RWPE1 (cell line): ENCODE measurements at regions of chr13 and their contacts with region 1.

Region 1: GRCh38 chr13:21139374-21139773 is 37.0 kb downstream of the SKA3 start:
- DNase-seq: no peak
- H3K27ac ChIP-seq: no peak overlapping the region
- CTCF ChIP-seq: no peak

Region 2: DNA sequence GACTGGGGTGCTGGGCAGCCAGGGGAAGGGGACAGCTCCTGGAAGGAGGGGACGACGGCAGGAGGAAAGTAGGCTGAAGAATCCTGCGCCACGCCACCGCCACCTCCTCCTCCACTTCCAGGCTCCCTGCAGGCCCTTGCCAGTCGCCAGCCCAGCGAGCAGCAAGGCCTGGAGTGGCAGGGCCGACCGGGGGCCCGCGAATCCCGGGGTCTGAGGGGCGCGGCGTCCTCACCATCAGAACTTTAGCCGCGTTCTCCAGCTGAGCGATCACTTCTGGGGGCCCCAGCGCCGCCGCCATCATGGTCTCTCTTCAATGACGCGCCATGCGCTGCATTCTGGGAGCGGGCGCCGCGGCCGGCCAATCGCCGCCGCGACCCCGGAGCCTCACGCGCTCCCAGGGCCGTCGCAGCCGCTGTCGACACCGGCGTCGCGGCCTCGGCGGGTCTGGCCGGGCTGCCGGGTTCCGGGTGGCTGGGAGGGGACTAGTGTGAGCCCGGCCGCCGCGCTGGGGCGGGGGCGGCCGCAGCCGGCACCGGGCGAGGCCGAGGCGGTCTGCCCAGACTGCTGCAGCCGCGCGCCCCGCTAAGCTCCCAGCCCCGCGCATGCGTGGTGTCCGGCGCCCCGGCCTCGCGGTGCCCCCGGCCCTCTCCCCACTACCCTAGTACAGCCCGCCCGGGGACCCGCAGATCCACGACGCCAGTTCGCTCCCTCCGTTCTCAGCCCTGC is 236.8 kb before region 1 on chr13 and contains the start of gene XPO4:
- CTCF ChIA-PET with region 1: no interaction called
- POLR2A ChIA-PET with region 1: no interaction called
- DNase-seq: peak; percentile 74
- H3K27ac ChIP-seq: peak within 1 kb of the TSS; percentile 86
- CTCF ChIP-seq: no peak

Region 3: DNA sequence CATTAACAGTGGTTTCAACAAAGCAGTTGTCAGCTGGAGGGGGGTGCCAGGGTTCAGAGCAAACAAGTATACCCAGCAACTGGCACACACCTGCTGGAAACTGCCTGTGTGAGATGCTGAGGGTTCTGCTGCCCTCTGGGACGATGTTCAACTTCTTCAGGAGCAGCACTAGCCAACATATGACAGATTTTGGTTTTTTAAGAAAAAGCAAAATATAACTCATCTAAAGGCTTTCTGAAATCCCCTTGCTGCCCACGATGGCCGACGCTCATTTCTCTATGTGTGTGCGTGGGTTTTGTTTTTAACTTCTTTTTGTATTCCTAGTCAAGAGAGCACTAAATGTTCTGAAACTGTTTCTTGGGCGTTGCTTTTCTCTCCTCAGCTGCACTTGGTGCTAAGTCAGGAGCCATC is 117.0 kb after region 1 on chr13:
- CTCF ChIA-PET with region 1: no interaction called
- POLR2A ChIA-PET with region 1: interaction called, 15 read pairs
- DNase-seq: no peak
- H3K27ac ChIP-seq: no peak overlapping the region
- CTCF ChIP-seq: no peak